Activated T-helper 2 cell treated with anti-CD3 and anti-CD28 coated beads, Interferon-gamma antibody, Interleukin-2, Interleukin-4, amounts not matched to agents 10 μg/mL and 5 μg/mL and 100 μg/mL, durations not matched to agents 14 hours and 24 hours and 36 hours (primary cell): ENCODE measurements at regions of chr1 and their contacts with region 1.

Region 1: DNA sequence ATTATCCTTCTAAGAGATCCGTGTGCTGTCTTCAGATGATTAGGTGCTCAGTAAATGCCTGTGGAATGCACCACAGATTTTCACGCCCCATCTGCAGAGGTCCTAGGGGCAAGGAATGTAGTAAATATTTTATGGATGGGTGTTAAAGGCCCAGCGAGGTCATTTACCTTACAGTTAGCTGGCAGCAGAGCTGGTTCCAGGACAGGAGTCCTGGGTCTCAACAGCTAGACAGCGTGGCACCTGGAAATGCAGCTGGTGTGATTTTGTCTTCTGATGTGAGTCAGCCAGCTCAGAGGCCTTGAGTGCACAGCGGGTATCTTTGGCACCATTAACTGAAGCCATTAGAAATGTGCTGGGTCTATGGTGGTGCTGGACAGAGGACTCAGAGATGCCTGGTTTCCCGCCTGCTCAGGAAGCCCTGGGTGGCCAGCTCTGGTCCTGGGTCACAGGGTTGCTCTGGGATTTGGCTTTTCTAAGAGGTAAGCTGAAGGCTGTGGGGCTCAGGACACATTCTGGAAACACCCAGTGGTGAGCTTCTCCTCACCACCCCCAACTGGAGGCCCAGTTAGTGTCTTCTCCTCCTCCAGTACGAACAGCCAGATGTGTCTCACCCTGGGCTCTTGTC is 65.5 kb downstream of the DDX20 start:
- DNase-seq: no peak
- H3K4me3 Mint-ChIP-seq: no peak overlapping the region
- H3K27ac Mint-ChIP-seq: no peak overlapping the region
- H3K4me1 Mint-ChIP-seq: no peaks in the 10 kb centered on the region
- H3K27me3 Mint-ChIP-seq: peaks cover 7% of the 10 kb centered on the region

Region 2: GRCh38 chr1:111804772-111805171 is 16.5 kb before region 1 on chr1:
- intact Hi-C with region 1: no loop called
- DNase-seq: no peak
- H3K4me3 Mint-ChIP-seq: no peak overlapping the region
- H3K27ac Mint-ChIP-seq: no peak overlapping the region
- H3K4me1 Mint-ChIP-seq: no peaks in the 10 kb centered on the region
- H3K27me3 Mint-ChIP-seq: peaks cover 6% of the 10 kb centered on the region

Region 3: GRCh38 chr1:111841189-111841588 is 20.0 kb after region 1 on chr1:
- intact Hi-C with region 1: loop called (anchors 2 kb)
- DNase-seq: no peak
- H3K4me3 Mint-ChIP-seq: no peak overlapping the region
- H3K27ac Mint-ChIP-seq: no peak overlapping the region
- H3K4me1 Mint-ChIP-seq: no peaks in the 10 kb centered on the region
- H3K27me3 Mint-ChIP-seq: peaks cover 5% of the 10 kb centered on the region

Region 4: GRCh38 chr1:111864791-111865190 is 43.6 kb after region 1 on chr1:
- intact Hi-C with region 1: no loop called
- DNase-seq: no peak
- H3K4me3 Mint-ChIP-seq: no peak overlapping the region
- H3K27ac Mint-ChIP-seq: no peak overlapping the region
- H3K4me1 Mint-ChIP-seq: no peaks in the 10 kb centered on the region
- H3K27me3 Mint-ChIP-seq: peaks cover 8% of the 10 kb centered on the region

Region 5: GRCh38 chr1:111880881-111881837 is 59.9 kb after region 1 on chr1:
- intact Hi-C with region 1: no loop called
- DNase-seq: no peak
- H3K4me3 Mint-ChIP-seq: no peak overlapping the region
- H3K27ac Mint-ChIP-seq: no peak overlapping the region
- H3K4me1 Mint-ChIP-seq: no peaks in the 10 kb centered on the region
- H3K27me3 Mint-ChIP-seq: peaks cover 11% of the 10 kb centered on the region